WTC11 (cell line): ENCODE measurements at regions of chr1 and their contacts with region 1.

Region 1: GRCh38 chr1:161021165-161021960 is 411 bp upstream of the F11R start:
- DNase-seq: peak; percentile 99
- ATAC-seq: peak; percentile 96
- H3K4me3 Mint-ChIP-seq: peak overlapping the region; percentile 87
- H3K27ac Mint-ChIP-seq: peak overlapping the region; percentile 100
- H3K4me1 Mint-ChIP-seq: peaks cover 50% of the 10 kb centered on the region
- H3K27me3 Mint-ChIP-seq: no peaks in the 10 kb centered on the region
- CTCF ChIP-seq: no peak

Region 2: GRCh38 chr1:160907976-160908375 is 113.4 kb before region 1 on chr1:
- CTCF ChIA-PET with region 1: no interaction called
- POLR2A ChIA-PET with region 1: no interaction called
- DNase-seq: no peak
- ATAC-seq: no peak
- H3K4me3 Mint-ChIP-seq: no peak overlapping the region
- H3K27ac Mint-ChIP-seq: no peak overlapping the region
- H3K4me1 Mint-ChIP-seq: peaks cover 16% of the 10 kb centered on the region
- H3K27me3 Mint-ChIP-seq: no peaks in the 10 kb centered on the region; the same call in 1 of the 2 replicates
- CTCF ChIP-seq: no peak

Region 3: DNA sequence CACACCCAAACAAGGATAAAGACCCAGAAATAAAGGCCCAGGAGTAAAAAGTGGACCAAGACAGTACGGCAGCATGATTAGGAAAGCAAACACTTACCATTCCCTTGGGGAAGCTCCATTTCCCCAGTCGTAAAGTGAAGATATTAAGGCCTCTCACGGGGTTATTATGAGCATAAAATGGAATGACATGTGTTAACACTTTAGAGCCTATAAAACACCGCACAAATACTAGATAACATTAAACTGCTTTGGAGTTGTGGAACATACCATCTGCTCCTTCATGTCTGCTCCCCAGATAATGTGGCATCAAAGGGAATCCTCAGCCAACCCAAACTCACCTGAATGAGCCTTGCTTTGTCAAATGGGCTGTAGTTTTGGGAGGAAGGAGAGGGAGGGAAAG is 57.8 kb before region 1 on chr1:
- CTCF ChIA-PET with region 1: no interaction called
- POLR2A ChIA-PET with region 1: no interaction called
- DNase-seq: no peak
- ATAC-seq: no peak
- H3K4me3 Mint-ChIP-seq: no peak overlapping the region
- H3K27ac Mint-ChIP-seq: no peak overlapping the region
- H3K4me1 Mint-ChIP-seq: peaks cover 13% of the 10 kb centered on the region
- H3K27me3 Mint-ChIP-seq: no peaks in the 10 kb centered on the region
- CTCF ChIP-seq: no peak

Region 4: GRCh38 chr1:161038523-161039153 is 17.3 kb after region 1 on chr1 and contains the start of gene TSTD1:
- CTCF ChIA-PET with region 1: interaction called, 47 read pairs
- POLR2A ChIA-PET with region 1: interaction called, 20 read pairs
- DNase-seq: peak; percentile 81
- ATAC-seq: peak; percentile 77
- H3K4me3 Mint-ChIP-seq: peak within 1 kb of the TSS; percentile 86
- H3K27ac Mint-ChIP-seq: peak within 1 kb of the TSS; percentile 92
- H3K4me1 Mint-ChIP-seq: peaks cover 36% of the 10 kb centered on the region
- H3K27me3 Mint-ChIP-seq: no peaks in the 10 kb centered on the region
- CTCF ChIP-seq: no peak
- total RNA-seq, gene TSTD1: 74.5 to 107 TPM (median 100 TPM) in 3 replicates

Region 5: DNA sequence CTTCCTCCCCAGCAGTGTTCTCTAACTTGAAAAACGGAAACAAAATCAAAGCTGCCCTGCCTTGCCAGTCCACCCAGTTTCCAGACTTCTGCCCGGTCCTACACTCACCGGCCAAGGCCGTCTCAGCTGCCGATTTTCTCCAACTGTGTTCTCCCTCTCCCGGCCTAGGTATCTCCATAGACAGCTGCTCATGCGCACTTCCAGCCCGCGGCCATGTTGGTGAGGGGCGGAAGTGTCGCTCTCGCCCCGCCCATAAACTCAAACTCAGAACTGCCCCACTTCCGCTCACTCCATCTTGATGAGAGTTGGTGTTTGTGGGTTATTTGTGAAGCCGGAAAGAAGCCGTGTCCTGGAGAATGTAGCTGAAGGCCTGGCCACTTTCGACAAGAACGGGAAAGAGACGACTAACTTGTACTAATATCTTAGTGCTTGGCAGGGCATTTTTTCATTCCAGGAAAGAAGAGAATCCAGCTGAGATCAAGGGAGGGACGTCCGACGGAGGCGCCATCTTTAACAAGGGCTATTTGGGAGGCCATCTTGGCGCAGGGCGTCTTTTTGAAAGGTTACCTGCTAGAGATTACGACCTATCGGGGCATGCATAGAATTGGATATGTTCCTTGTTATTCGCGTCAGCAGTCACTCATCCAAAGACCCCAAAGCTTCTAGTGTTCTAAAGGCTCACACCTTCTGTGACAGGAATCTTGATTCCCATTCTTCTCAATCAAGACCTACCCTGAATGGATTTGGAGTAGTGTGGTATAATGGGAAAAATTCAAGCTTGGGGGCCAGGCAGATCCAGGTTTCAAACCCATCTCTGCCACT is 24.6 kb after region 1 on chr1 and contains the start of gene USF1:
- CTCF ChIA-PET with region 1: interaction called, 47 read pairs
- POLR2A ChIA-PET with region 1: interaction called, 24 read pairs
- DNase-seq: peak; percentile 92
- ATAC-seq: peak; percentile 77
- H3K4me3 Mint-ChIP-seq: peak within 1 kb of the TSS; percentile 97
- H3K27ac Mint-ChIP-seq: peak within 1 kb of the TSS; percentile 100
- H3K4me1 Mint-ChIP-seq: peaks cover 24% of the 10 kb centered on the region
- H3K27me3 Mint-ChIP-seq: peaks cover 38% of the 10 kb centered on the region
- CTCF ChIP-seq: no peak
- total RNA-seq, gene USF1: 55.9 to 65.6 TPM (median 57.8 TPM) in 3 replicates

Region 6: GRCh38 chr1:161132410-161133219 is 111.3 kb after region 1 on chr1 and contains the start of gene DEDD:
- CTCF ChIA-PET with region 1: no interaction called
- POLR2A ChIA-PET with region 1: interaction called, 10 read pairs
- DNase-seq: peak; percentile 90
- ATAC-seq: peak; percentile 83
- H3K4me3 Mint-ChIP-seq: no peak within 1 kb of the TSS
- H3K27ac Mint-ChIP-seq: peak within 1 kb of the TSS; percentile 88
- H3K4me1 Mint-ChIP-seq: peaks cover 27% of the 10 kb centered on the region
- H3K27me3 Mint-ChIP-seq: no peaks in the 10 kb centered on the region
- CTCF ChIP-seq: no peak
- total RNA-seq, gene DEDD: 39.2 to 43.3 TPM (median 40.0 TPM) in 3 replicates